Heart right ventricle (tissue), 16 donors: ENCODE measurements at regions of chr4 and their contacts with region 1.

Region 1: GRCh38 chr4:153232768-153233167 is 28.5 kb downstream of the TRIM2 start:
- DNase-seq: peak; percentile 44 to 66
- ATAC-seq: peak; percentile 74 to 95 (median 88)
- H3K4me3 ChIP-seq: no peak overlapping the region
- H3K27ac ChIP-seq: peak overlapping the region in 2 of 10 donors; percentile 36 to 37
- H3K4me1 ChIP-seq: peaks cover 8 to 65% (median 33%) of the 10 kb centered on the region in 9 donors
- H3K27me3 ChIP-seq: no peaks in the 10 kb centered on the region
- CTCF ChIP-seq: peak in 7 of 9 donors; percentile 27 to 57 (median 45)

Region 2: GRCh38 chr4:153189016-153189801 is 43.6 kb before region 1 on chr4:
- intact Hi-C with region 1: no loop called
- DNase-seq: no peak
- ATAC-seq: no peak
- H3K4me3 ChIP-seq: no peak overlapping the region
- H3K27ac ChIP-seq: no peak overlapping the region
- H3K4me1 ChIP-seq: peaks cover 0 to 6% (median 0%) of the 10 kb centered on the region in 9 donors
- H3K27me3 ChIP-seq: no peaks in the 10 kb centered on the region
- CTCF ChIP-seq: no peak

Region 3: GRCh38 chr4:153276971-153277370 is 44.2 kb after region 1 on chr4:
- intact Hi-C with region 1: loop called in 1 of 10 experiments (anchors 5 kb)
- DNase-seq: peak in 1 of 2 donors; percentile 15
- ATAC-seq: peak in 4 of 8 donors; percentile 38 to 91 (median 62)
- H3K4me3 ChIP-seq: no peak overlapping the region
- H3K27ac ChIP-seq: no peak overlapping the region
- H3K4me1 ChIP-seq: peaks cover 0 to 17% (median 4%) of the 10 kb centered on the region in 9 donors
- H3K27me3 ChIP-seq: no peaks in the 10 kb centered on the region
- CTCF ChIP-seq: no peak